GM12878 (cell line): ENCODE measurements at regions of chr13 and their contacts with region 1.

Region 1: GRCh38 chr13:26872525-26873385 is 112.2 kb upstream of the GPR12 start:
- DNase-seq: no peak
- ATAC-seq: peak; percentile 86
- H3K4me3 ChIP-seq: no peak overlapping the region
- H3K27ac ChIP-seq: no peak overlapping the region
- H3K4me1 ChIP-seq: no peaks in the 10 kb centered on the region
- H3K27me3 ChIP-seq: no peaks in the 10 kb centered on the region; a peak in 1 of 4 replicates
- CTCF ChIP-seq: peak; percentile 65 to 84 (median 80)
- EP300 ChIP-seq: no peak
- POLR2A ChIP-seq: no peak
- RAD21 ChIP-seq: peak; percentile 45

Region 2: DNA sequence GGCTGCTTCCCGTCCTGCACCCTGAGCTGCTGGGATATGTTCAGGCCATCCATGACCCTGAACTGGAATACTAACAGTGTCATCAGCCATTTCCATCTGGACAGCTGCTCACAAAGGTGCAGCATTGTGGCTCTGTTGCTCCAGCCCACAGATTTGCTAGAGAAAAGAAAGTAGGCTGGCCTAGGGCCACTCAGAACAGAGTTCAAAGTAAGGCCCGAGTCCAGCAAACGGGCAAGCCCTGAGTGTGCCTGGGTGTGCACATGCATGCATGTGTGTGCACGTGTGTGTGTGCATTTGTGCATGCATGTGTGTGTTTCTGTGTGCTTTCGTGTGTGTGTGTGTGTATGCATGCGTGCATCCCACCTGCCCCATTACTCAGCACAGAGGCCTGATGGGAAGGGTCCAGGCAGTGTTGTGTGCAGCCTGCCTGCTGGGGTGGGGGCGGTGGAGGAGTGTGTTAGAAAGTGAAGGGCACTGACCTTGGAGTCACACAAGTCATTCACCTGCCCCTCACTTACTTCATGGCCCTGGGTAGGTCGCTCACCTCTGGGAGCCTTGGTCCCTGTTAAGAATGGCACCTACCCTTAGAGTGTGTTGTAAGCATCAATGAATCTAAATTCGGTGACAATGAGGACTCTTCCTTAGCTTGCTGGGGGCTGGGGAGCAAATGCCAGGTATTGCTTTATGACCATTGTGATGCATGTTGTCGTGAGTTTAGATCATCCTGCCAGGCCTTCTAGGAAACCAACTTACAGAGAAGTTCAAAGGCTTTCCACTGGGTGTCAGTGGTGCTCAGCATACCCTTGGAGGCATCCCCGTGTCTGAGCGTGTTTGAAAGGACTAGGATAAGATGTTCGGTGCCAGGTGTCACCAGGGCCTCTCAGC is 165.4 kb before region 1 on chr13:
- CTCF ChIA-PET with region 1: interaction called, 6 read pairs
- POLR2A ChIA-PET with region 1: no interaction called
- RAD21 ChIA-PET with region 1: no interaction called
- SMC1A ChIA-PET with region 1: no interaction called
- in situ Hi-C with region 1: no loop called
- intact Hi-C with region 1: loop called (anchors 1 kb)
- DNase-seq: no peak
- ATAC-seq: peak; percentile 76
- H3K4me3 ChIP-seq: no peak overlapping the region
- H3K27ac ChIP-seq: no peak overlapping the region
- H3K4me1 ChIP-seq: no peaks in the 10 kb centered on the region
- H3K27me3 ChIP-seq: no peaks in the 10 kb centered on the region
- CTCF ChIP-seq: peak; percentile 50 to 54 (median 53)
- EP300 ChIP-seq: no peak
- POLR2A ChIP-seq: no peak
- RAD21 ChIP-seq: peak; percentile 64

Region 3: GRCh38 chr13:26771796-26772195 is 101.0 kb before region 1 on chr13:
- CTCF ChIA-PET with region 1: no interaction called
- POLR2A ChIA-PET with region 1: no interaction called
- RAD21 ChIA-PET with region 1: no interaction called
- SMC1A ChIA-PET with region 1: no interaction called
- in situ Hi-C with region 1: no loop called
- intact Hi-C with region 1: no loop called
- DNase-seq: no peak
- ATAC-seq: no peak
- H3K4me3 ChIP-seq: no peak overlapping the region
- H3K27ac ChIP-seq: no peak overlapping the region
- H3K4me1 ChIP-seq: no peaks in the 10 kb centered on the region
- H3K27me3 ChIP-seq: no peaks in the 10 kb centered on the region; a peak in 1 of 4 replicates
- CTCF ChIP-seq: no peak
- EP300 ChIP-seq: no peak
- POLR2A ChIP-seq: no peak
- RAD21 ChIP-seq: no peak

Region 4: DNA sequence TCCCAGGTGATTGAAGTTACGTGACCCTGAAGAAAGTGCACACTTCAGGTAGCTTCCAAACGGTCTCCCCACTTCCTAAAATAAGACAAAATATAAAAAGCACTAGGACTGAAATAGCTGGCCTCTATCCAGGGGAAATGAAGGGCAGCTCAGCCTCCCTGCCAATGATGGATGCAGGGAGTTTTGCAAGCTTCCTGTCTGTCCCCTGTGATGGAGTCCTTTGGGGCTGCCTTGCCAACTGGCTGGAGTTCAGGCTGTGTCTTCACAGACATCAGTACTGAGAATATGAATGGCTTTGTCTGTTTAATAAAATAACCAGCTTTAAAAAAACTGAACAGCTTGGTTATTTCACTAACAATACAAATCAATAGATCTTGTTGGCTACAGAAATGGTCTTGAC is 10.8 kb before region 1 on chr13:
- CTCF ChIA-PET with region 1: interaction called, 19 read pairs
- POLR2A ChIA-PET with region 1: no interaction called
- RAD21 ChIA-PET with region 1: no interaction called
- SMC1A ChIA-PET with region 1: no interaction called
- in situ Hi-C with region 1: no loop called
- intact Hi-C with region 1: no loop called
- DNase-seq: no peak
- ATAC-seq: no peak
- H3K4me3 ChIP-seq: no peak overlapping the region
- H3K27ac ChIP-seq: no peak overlapping the region
- H3K4me1 ChIP-seq: no peaks in the 10 kb centered on the region
- H3K27me3 ChIP-seq: no peaks in the 10 kb centered on the region
- CTCF ChIP-seq: no peak
- EP300 ChIP-seq: no peak
- POLR2A ChIP-seq: no peak
- RAD21 ChIP-seq: no peak

Region 5: DNA sequence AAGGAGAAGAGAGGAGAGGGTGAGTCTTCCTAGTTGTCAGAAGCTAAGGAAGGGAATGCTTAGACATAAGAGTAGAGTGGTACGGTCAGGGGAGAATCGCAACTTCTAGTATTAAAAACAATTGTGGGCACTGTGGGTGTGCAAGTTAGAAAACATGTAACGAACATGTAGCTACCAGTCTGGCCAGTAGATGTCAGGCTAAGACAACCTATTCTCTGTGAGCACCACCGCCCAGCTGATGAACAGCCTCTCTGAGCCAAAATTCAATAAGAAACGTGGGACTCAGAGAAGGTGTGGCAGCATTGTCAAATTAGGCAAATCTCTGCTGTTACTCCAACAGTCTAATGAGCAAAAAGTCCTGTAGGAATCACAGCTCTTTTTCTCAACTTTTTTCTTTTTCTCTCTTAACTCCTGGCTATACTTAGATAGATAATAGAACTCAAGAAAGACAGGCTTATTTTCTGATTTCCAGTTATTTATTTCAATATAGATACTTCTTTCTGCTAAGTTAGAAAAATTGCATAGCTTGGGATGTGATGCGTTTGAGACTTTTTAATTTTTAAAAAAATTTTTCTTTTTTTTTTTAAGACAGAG is 112.6 kb after region 1 on chr13:
- CTCF ChIA-PET with region 1: no interaction called
- POLR2A ChIA-PET with region 1: no interaction called
- RAD21 ChIA-PET with region 1: no interaction called
- SMC1A ChIA-PET with region 1: no interaction called
- in situ Hi-C with region 1: no loop called
- intact Hi-C with region 1: no loop called
- DNase-seq: peak; percentile 49
- ATAC-seq: peak; percentile 91
- H3K4me3 ChIP-seq: no peak overlapping the region
- H3K27ac ChIP-seq: no peak overlapping the region
- H3K4me1 ChIP-seq: no peaks in the 10 kb centered on the region
- H3K27me3 ChIP-seq: no peaks in the 10 kb centered on the region
- CTCF ChIP-seq: peak; percentile 64 to 93 (median 68); a peak in 4 of 6 replicates
- EP300 ChIP-seq: no peak
- POLR2A ChIP-seq: no peak
- RAD21 ChIP-seq: peak; percentile 93